ENCODE measurements at regions of chr1 and their contacts with region 1.

Region 1: DNA sequence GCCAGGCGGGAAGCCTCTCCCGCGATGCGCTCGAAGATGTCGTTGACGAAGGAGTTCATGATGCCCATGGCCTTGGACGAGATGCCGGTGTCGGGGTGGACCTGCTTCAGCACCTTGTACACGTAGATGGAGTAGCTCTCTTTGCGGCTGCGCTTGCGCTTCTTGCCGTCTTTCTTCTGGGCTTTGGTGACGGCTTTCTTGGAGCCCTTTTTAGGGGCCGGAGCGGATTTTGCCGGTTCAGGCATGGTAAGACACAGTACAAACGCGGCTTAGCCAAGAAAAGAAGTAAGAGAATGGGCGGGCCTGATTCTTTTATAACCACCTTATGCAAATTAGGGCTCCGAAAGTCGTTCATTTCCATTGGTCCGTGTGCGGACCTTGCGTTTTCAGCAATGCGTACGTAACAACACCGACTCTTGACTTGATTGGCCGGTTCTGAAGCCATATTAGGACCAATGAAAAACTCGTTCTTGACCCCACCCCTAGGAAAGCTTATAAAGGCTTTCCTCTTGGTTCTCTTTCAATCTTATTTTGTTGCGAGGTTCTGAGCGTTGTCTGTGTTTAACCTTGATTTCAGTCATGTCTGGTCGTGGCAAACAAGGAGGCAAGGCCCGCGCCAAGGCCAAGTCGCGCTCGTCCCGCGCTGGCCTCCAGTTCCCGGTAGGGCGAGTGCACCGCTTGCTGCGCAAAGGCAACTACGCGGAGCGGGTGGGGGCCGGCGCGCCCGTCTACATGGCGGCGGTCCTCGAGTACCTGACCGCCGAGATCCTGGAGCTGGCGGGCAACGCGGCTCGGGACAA is 12.8 kb upstream of the BOLA1 start:
- DNase-seq: peak; percentile 87 to 92
- H3K4me3 ChIP-seq: peak overlapping the region; percentile 70 to 92 (median 82)
- H3K27ac ChIP-seq: peak overlapping the region; percentile 98
- H3K4me1 ChIP-seq: peaks cover 0 to 5% (median 0%) of the 10 kb centered on the region in 4 experiments; a peak in 4 of 7 replicates
- H3K27me3 ChIP-seq: no peaks in the 10 kb centered on the region
- CTCF ChIP-seq: no peak
- EP300 ChIP-seq: peak in 1 of 2 experiments; percentile 14; a peak in 1 of 3 replicates
- POLR2A ChIP-seq: peak; percentile 93 to 95
- RAD21 ChIP-seq: no peak

Region 2: GRCh38 chr1:149906570-149907075 is 20.0 kb after region 1 on chr1:
- CTCF ChIA-PET with region 1: interaction called, 3 read pairs
- POLR2A ChIA-PET with region 1: interaction called, 78 read pairs
- DNase-seq: no peak
- H3K4me3 ChIP-seq: no peak overlapping the region
- H3K27ac ChIP-seq: no peak overlapping the region
- H3K4me1 ChIP-seq: peaks cover 0 to 3% (median 0%) of the 10 kb centered on the region in 4 experiments; a peak in 1 of 7 replicates
- H3K27me3 ChIP-seq: no peaks in the 10 kb centered on the region
- CTCF ChIP-seq: no peak
- EP300 ChIP-seq: no peak
- POLR2A ChIP-seq: no peak
- RAD21 ChIP-seq: no peak

Region 3: DNA sequence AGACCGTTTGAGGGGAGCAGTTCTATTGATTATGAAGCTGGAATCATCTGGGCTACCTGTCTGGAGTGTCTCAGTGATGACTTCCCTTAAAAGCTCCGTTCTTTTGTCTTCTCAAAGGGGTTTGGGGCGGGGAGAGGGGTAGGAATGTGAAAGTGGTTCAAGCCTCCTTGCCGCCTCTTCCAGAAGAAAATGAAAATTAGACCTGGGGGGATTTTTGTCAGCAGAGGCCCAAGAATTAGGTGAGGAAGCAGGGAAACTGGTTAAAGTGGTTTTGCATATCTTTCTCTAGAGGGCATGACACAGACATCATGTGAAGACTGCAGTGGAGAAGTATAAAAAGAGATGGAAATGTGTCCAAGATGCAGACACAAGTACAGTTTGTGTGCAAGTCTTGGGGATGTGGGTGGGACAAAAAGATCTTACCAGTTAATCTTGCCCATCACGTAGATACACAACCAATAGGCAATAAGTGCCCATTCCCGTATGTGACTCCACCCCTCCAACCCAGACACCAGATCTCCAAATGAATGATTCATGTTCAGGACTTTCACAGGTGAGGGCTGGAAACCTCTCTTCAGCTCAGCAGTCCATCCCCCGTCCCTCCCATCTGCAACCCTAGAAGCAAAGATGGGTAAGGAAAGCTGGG is 50.6 kb after region 1 on chr1:
- CTCF ChIA-PET with region 1: interaction called, 14 read pairs
- POLR2A ChIA-PET with region 1: interaction called, 65 read pairs
- DNase-seq: no peak
- H3K4me3 ChIP-seq: peak overlapping the region in 3 of 4 experiments; percentile 17 to 55 (median 24); a peak in 5 of 8 replicates
- H3K27ac ChIP-seq: no peak overlapping the region
- H3K4me1 ChIP-seq: peaks cover 5 to 22% (median 13%) of the 10 kb centered on the region in 4 experiments
- H3K27me3 ChIP-seq: no peaks in the 10 kb centered on the region
- CTCF ChIP-seq: no peak
- EP300 ChIP-seq: no peak
- POLR2A ChIP-seq: peak in 1 of 2 experiments; percentile 59; a peak in 1 of 3 replicates
- RAD21 ChIP-seq: no peak

Region 4: GRCh38 chr1:150051089-150051373 is 164.4 kb after region 1 on chr1:
- CTCF ChIA-PET with region 1: no interaction called
- POLR2A ChIA-PET with region 1: interaction called, 22 read pairs
- DNase-seq: no peak
- H3K4me3 ChIP-seq: no peak overlapping the region
- H3K27ac ChIP-seq: no peak overlapping the region
- H3K4me1 ChIP-seq: no peaks in the 10 kb centered on the region
- H3K27me3 ChIP-seq: no peaks in the 10 kb centered on the region
- CTCF ChIP-seq: no peak
- EP300 ChIP-seq: no peak
- POLR2A ChIP-seq: no peak
- RAD21 ChIP-seq: no peak

Region 5: DNA sequence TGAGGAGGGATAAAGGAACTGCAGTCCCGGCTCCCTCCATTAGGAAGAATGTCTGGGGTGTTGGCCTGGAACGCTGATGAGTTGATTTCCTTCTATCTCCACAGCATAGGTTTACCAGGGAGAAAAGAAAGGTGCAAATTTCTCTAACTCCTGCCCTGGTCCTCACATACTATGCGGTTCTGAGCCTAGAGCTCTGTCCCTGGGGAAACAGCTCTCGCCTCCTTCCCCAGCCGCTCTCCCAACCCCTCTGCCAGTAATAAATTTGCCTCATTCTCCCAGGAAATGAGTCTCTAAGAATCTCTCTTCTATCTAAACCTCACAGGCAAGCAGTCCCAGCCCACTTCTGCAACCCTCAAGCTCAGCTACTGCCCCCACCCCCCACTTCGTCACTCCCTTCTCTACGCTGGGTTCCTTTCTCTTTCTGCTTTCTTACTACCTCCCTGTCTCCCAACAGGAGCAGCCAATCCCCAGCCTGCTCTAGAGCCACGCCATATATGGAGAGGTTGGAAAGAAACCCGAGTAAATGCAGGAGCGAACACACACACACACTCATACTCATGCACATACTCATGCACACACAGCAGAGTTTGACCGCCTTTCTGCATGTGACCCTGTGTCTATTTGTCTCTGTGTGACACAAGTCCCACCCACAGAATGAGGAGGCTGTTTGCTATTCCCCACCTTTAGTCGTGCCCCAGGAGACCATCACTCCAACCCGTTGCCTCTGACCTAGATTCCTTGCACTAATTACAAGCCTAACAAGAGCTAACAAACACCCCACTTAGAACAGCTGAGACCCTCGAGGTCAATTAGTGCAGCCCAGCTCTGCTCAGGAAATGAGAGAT is 276.5 kb after region 1 on chr1:
- CTCF ChIA-PET with region 1: no interaction called
- POLR2A ChIA-PET with region 1: interaction called, 83 read pairs
- DNase-seq: peak; percentile 79 to 90
- H3K4me3 ChIP-seq: peak overlapping the region; percentile 12 to 55 (median 46); a peak in 7 of 8 replicates
- H3K27ac ChIP-seq: peak overlapping the region; percentile 98
- H3K4me1 ChIP-seq: peaks cover 12 to 30% (median 20%) of the 10 kb centered on the region in 4 experiments
- H3K27me3 ChIP-seq: no peaks in the 10 kb centered on the region
- CTCF ChIP-seq: no peak
- EP300 ChIP-seq: peak in 1 of 2 experiments; percentile 80; a peak in 1 of 3 replicates
- POLR2A ChIP-seq: peak; percentile 80 to 82
- RAD21 ChIP-seq: no peak

Region 6: DNA sequence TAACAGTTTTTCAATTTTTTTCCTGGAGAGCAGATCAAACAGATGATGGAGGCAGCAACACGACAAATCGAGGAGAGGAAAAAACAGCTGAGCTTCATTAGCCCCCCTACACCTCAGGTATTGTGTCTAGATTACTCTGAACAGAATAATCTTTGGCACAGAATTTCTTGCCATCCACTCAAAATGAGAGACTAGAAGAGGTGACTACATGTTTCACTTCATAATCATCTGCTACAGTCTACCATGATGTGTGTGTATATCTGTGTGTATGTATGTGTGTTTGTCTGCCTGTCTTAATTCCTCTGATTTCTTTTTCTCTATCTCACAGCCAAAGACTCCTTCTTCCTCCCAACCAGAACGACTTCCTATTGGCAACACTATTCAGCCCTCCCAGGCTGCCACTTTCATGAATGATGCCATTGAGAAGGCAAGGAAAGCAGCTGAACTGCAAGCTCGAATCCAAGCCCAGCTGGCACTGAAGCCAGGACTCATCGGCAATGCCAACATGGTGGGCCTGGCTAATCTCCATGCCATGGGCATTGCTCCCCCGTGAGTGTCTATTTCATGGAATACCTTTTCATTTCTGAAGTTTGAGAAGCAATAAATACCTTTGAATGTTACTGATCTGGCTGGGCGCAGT is 446.2 kb after region 1 on chr1:
- CTCF ChIA-PET with region 1: no interaction called
- POLR2A ChIA-PET with region 1: no interaction called
- DNase-seq: no peak
- H3K4me3 ChIP-seq: no peak overlapping the region
- H3K27ac ChIP-seq: no peak overlapping the region
- H3K4me1 ChIP-seq: no peaks in the 10 kb centered on the region
- H3K27me3 ChIP-seq: no peaks in the 10 kb centered on the region
- CTCF ChIP-seq: no peak
- EP300 ChIP-seq: no peak
- POLR2A ChIP-seq: no peak
- RAD21 ChIP-seq: no peak